A549 (cell line): ENCODE measurements at regions of chr10 and their contacts with region 1.

Region 1: GRCh38 chr10:117174439-117175214 is 22.7 kb upstream of the KCNK18 start:
- DNase-seq: peak; percentile 80 to 91
- ATAC-seq: peak; percentile 84 to 93
- H3K4me3 ChIP-seq: peak overlapping the region; percentile 55
- H3K27ac ChIP-seq: peak overlapping the region in 1 of 2 experiments; percentile 59; a peak in 3 of 6 replicates
- H3K4me1 ChIP-seq: 0 out of 3 replicates have a peak, but pooled peaks cover 4% of the 10 kb centered on the region
- CTCF ChIP-seq: peak; percentile 89
- EP300 ChIP-seq: no peak
- POLR2A ChIP-seq: no peak
- RAD21 ChIP-seq: peak; percentile 88 to 93

Region 2: DNA sequence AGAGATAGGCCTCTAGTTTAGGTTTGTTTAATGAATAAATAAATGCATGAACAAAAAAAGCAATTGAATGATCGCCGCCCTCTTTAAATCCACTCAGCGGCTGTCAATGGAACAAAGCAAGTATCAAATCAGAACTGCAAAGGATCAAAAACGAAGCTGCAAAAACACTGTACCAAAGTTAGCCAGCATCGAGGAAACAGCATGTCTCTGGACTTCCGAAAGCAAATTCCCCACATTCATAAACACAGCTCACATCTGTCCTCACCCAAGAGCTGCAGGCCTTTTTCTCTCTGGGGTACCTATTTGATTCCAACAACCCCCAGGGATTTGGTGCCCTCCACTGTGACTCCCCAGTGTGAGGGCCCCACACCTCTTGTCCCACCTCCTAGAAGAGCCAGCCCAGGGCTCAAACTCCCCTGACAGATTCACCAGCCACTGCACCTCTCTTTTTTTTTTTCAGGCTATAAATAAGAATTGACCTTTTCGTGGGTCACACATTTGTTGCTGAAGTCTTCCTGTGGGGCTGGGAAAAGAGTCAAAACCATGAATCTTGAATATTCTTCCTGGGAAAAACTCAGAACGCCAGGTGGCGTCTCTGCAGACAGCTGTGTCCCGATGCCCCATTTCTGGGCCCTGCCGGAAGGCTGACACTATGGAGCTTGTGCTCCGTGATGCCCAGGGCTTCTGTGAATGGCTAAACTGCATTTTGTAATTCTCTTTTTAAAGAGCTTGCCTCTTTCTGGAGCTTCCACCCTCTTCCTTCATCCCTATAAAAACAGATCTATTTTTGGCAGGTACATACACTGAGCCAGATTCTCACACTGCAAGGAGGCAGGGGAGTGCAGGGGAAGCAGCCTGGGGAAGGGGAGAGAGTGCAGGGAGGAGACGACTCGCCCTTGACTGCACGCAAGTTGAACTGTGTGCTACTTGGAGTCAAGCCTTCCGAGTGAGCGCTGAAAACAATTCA is 484.0 kb before region 1 on chr10:
- CTCF ChIA-PET with region 1: interaction called, 42 read pairs
- POLR2A ChIA-PET with region 1: no interaction called
- DNase-seq: no peak
- ATAC-seq: peak in 1 of 2 experiments; percentile 53; a peak in 2 of 6 replicates
- H3K4me3 ChIP-seq: no peak overlapping the region
- H3K27ac ChIP-seq: no peak overlapping the region
- H3K4me1 ChIP-seq: no peaks in the 10 kb centered on the region
- CTCF ChIP-seq: peak; percentile 2; the same call in 1 of the 3 replicates
- EP300 ChIP-seq: no peak
- POLR2A ChIP-seq: no peak
- RAD21 ChIP-seq: peak; percentile 21 to 22; a peak in 1 of 5 replicates

Region 3: DNA sequence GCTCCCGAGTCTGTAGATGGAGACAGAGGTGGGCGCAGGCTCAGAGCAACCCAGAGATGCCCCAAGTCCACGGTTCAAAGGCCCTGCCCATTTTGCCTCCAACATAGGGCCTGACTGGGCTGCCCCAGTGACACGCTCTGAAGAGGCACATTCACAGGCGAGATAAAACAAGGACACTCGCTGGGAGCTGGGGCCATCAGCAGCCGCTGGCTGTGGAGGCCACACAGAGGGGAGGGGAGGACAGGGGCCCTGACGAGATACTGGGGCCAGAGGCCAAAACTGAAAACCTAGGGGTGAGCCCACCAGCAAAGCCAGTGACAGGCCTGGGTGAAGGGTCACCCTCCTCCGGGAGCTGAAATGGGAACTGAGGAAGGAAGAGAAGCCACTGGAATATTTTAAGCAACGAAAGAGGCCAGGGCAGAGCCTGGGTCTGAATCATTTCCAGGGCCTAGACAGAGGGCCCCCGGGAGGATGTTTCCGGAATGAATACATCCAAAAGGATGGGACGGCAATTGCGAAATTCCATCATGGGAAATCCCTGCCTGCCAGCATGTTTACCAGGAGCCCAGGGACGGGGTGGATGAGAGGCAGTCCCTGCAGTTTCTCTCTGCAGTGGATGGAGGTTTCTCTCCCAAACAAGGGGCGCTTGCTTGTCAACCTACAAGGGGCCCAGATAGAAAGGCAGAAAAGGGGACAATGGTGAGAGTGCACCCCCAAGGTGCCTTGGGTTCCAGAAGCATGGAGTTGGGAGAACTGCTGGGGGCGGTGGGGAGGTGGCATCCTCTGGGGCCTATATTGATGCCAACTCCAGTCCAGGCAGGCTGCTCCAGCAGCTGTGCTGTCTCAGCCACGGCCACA is 403.3 kb before region 1 on chr10:
- CTCF ChIA-PET with region 1: interaction called, 13 read pairs
- POLR2A ChIA-PET with region 1: no interaction called
- DNase-seq: peak; percentile 68 to 79
- ATAC-seq: peak; percentile 65 to 84
- H3K4me3 ChIP-seq: no peak overlapping the region
- H3K27ac ChIP-seq: peak overlapping the region; percentile 78 to 87
- H3K4me1 ChIP-seq: peaks cover 64% of the 10 kb centered on the region
- CTCF ChIP-seq: no peak
- EP300 ChIP-seq: peak in 1 of 2 experiments; percentile 28; a peak in 1 of 5 replicates
- POLR2A ChIP-seq: no peak
- RAD21 ChIP-seq: no peak

Region 4: DNA sequence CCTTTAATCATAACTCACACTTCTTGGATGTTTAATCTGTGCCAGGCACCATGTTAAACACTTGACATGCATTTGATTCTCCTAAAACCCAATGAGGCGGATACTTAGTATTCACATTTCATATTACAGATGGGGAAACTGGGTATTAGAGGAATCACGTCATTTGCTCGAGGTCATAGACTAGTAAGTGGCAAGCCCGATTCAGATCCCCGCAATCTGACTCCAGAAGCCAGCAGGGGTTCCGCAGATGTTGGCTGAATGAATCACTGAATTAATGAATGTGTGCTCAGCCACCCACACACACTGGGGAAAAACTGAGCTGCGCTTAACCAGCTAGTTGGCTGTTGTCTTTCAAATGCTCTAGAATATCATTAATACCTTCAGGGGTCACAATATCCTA is 347.8 kb before region 1 on chr10:
- CTCF ChIA-PET with region 1: interaction called, 10 read pairs
- POLR2A ChIA-PET with region 1: no interaction called
- DNase-seq: no peak
- ATAC-seq: peak in 1 of 2 experiments; percentile 24; a peak in 2 of 6 replicates
- H3K4me3 ChIP-seq: no peak overlapping the region
- H3K27ac ChIP-seq: no peak overlapping the region
- H3K4me1 ChIP-seq: 0 out of 3 replicates have a peak, but pooled peaks cover 3% of the 10 kb centered on the region
- CTCF ChIP-seq: no peak
- EP300 ChIP-seq: no peak
- POLR2A ChIP-seq: no peak
- RAD21 ChIP-seq: no peak

Region 5: DNA sequence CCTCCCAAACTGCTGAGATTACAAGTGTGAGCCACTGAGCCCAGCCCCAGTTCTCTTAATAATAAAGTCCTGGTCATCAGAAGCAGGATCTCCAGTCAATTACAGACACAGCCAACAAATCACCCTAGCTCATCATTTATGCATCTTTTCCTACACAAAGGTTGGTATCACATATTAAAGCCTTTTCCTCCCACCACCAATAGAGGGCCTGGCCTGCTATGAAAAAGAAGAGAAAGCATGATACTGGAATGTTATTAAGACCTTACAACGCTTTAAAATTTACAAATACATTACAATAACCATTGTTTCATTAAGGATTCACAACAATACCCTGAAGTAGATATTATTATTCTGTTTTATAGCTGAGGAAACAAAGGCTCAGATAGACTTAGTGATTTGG is 62.4 kb before region 1 on chr10:
- CTCF ChIA-PET with region 1: interaction called, 15 read pairs
- POLR2A ChIA-PET with region 1: no interaction called
- DNase-seq: peak in 1 of 2 experiments; percentile 21
- ATAC-seq: peak; percentile 71 to 82; a peak in 4 of 6 replicates
- H3K4me3 ChIP-seq: no peak overlapping the region
- H3K27ac ChIP-seq: no peak overlapping the region
- H3K4me1 ChIP-seq: no peaks in the 10 kb centered on the region
- CTCF ChIP-seq: peak; percentile 52
- EP300 ChIP-seq: no peak
- POLR2A ChIP-seq: no peak
- RAD21 ChIP-seq: peak; percentile 37 to 55; a peak in 4 of 5 replicates

Region 6: GRCh38 chr10:117186832-117187615 is 12.4 kb after region 1 on chr10:
- CTCF ChIA-PET with region 1: interaction called, 26 read pairs
- POLR2A ChIA-PET with region 1: no interaction called
- DNase-seq: peak in 1 of 2 experiments; percentile 20
- ATAC-seq: peak in 1 of 2 experiments; percentile 70; a peak in 3 of 6 replicates
- H3K4me3 ChIP-seq: no peak overlapping the region
- H3K27ac ChIP-seq: no peak overlapping the region
- H3K4me1 ChIP-seq: peaks cover 5% of the 10 kb centered on the region; the same call in 1 of the 3 replicates
- CTCF ChIP-seq: no peak
- EP300 ChIP-seq: no peak
- POLR2A ChIP-seq: no peak
- RAD21 ChIP-seq: no peak